Naive thymus-derived CD4-positive, alpha-beta T cell (primary cell): ENCODE measurements at regions of chr7 and their contacts with region 1.

Region 1: DNA sequence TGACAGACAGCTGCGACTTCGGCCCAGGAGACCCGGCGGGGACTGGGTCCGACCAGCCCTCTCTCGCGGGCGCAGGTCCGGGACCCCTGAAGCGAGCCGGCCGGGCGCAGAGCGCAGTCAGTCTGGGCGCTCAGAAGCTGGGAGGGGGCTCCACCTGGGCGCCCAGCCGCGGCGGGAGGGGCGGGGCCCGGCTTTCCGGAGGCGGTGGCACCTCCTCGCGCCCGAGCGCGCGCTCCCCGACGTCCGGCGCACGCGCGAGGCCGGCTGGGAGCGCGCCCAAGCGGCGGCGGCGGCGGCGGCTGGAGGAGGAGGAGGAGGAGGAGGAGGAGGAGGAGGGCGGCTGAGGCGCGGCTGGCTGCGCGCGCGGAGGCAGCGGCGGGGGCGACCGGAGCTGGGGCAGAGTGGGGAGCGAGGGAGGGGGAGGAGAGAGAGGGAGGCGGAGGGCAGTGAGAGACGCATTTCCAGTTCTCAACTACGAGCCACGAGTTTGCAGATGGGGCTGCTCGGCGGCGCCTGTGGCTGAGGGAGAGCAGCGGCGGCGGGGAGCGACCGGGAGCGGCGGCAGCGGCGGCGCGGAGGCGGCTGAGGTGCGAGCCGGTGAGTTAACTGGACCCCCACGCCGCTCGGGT is at the start of gene PALS2:
- DNase-seq: peak; percentile 78 to 88 (median 85)
- ATAC-seq: peak; percentile 88
- H3K4me3 ChIP-seq: peak within 1 kb of the TSS; percentile 78
- H3K4me3 Mint-ChIP-seq: peak within 1 kb of the TSS; percentile 93 to 100 (median 94)
- H3K27ac ChIP-seq: peak within 1 kb of the TSS; percentile 77
- H3K27ac Mint-ChIP-seq: peak within 1 kb of the TSS; percentile 84 to 96 (median 94)
- H3K4me1 ChIP-seq: peaks cover 13 to 24% of the 10 kb centered on the region in 2 donors
- H3K4me1 Mint-ChIP-seq: peaks cover 21 to 52% (median 42%) of the 10 kb centered on the region in 7 donors
- H3K27me3 ChIP-seq: no peaks in the 10 kb centered on the region
- H3K27me3 Mint-ChIP-seq: peaks cover 0 to 45% (median 0%) of the 10 kb centered on the region in 5 donors
- total RNA-seq, gene PALS2: 15.4 to 58.4 (median 34.0) TPM

Region 2: GRCh38 chr7:22672846-22673652 is 1900.1 kb before region 1 on chr7:
- CTCF ChIA-PET with region 1: no interaction called
- POLR2A ChIA-PET with region 1: no interaction called
- intact Hi-C with region 1: loop called in 1 of 2 experiments (anchors 5 kb)
- DNase-seq: no peak
- ATAC-seq: no peak
- H3K4me3 ChIP-seq: no peak overlapping the region
- H3K4me3 Mint-ChIP-seq: peak overlapping the region in 7 of 10 donors; percentile 7 to 68 (median 37)
- H3K27ac ChIP-seq: no peak overlapping the region
- H3K27ac Mint-ChIP-seq: peak overlapping the region; percentile 14 to 88 (median 78)
- H3K4me1 ChIP-seq: peaks cover 18 to 54% of the 10 kb centered on the region in 2 donors
- H3K4me1 Mint-ChIP-seq: peaks cover 43 to 68% (median 65%) of the 10 kb centered on the region in 7 donors
- H3K27me3 ChIP-seq: no peaks in the 10 kb centered on the region
- H3K27me3 Mint-ChIP-seq: peaks cover 0 to 13% (median 0%) of the 10 kb centered on the region in 5 donors

Region 3: DNA sequence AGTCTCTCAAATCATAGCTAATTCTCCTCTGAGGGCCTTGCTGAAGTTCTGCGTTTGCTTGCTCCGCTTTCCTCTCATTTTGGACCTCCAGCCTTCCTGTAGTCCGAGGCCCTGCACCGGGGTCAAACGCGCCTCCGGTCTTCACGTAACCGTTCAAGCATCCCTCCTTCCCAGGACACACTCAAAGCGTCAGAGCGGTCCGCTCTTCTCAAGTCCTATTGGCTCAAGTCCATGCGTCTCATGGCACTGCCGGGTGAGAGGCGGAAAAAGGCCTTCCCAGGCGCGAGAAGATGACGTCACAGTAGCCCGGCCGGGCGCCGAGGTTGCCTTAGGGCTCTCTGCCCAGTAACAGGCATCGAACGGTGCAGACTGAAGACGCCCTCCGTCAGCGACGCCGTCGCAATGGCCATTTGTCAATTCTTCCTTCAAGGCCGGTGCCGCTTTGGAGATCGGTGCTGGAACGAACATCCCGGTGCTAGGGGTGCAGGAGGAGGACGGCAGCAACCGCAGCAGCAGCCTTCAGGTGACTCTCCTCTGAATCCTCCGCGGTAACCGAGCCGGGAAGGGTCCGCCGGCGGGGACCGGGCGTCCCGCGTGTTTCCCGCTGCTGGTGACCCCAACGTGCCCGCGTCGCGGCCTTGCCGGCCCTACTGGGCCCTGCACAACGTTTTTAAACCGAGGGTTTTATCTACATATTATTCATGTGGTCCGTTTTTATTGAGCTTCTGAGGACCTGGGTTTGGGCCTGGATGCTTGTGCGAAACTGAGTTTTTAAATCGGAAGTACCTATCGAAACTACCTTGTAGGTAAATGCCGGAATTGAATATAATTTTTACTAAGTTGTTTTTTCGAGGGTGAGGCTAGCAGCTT is 1391.2 kb before region 1 on chr7 and contains the start of gene NUP42:
- CTCF ChIA-PET with region 1: no interaction called
- POLR2A ChIA-PET with region 1: no interaction called
- intact Hi-C with region 1: loop called in 1 of 2 experiments (anchors 5 kb)
- DNase-seq: peak; percentile 87 to 95 (median 93)
- ATAC-seq: peak; percentile 97
- H3K4me3 ChIP-seq: peak within 1 kb of the TSS; percentile 86
- H3K4me3 Mint-ChIP-seq: peak within 1 kb of the TSS; percentile 95 to 100 (median 98)
- H3K27ac ChIP-seq: peak within 1 kb of the TSS; percentile 85
- H3K27ac Mint-ChIP-seq: peak within 1 kb of the TSS; percentile 97 to 99 (median 98)
- H3K4me1 ChIP-seq: peaks cover 16 to 17% of the 10 kb centered on the region in 2 donors
- H3K4me1 Mint-ChIP-seq: peaks cover 20 to 50% (median 43%) of the 10 kb centered on the region in 7 donors
- H3K27me3 ChIP-seq: no peaks in the 10 kb centered on the region
- H3K27me3 Mint-ChIP-seq: peaks cover 0 to 16% (median 0%) of the 10 kb centered on the region in 5 donors
- total RNA-seq, gene NUP42: 19.8 to 37.7 (median 27.5) TPM

Region 4: DNA sequence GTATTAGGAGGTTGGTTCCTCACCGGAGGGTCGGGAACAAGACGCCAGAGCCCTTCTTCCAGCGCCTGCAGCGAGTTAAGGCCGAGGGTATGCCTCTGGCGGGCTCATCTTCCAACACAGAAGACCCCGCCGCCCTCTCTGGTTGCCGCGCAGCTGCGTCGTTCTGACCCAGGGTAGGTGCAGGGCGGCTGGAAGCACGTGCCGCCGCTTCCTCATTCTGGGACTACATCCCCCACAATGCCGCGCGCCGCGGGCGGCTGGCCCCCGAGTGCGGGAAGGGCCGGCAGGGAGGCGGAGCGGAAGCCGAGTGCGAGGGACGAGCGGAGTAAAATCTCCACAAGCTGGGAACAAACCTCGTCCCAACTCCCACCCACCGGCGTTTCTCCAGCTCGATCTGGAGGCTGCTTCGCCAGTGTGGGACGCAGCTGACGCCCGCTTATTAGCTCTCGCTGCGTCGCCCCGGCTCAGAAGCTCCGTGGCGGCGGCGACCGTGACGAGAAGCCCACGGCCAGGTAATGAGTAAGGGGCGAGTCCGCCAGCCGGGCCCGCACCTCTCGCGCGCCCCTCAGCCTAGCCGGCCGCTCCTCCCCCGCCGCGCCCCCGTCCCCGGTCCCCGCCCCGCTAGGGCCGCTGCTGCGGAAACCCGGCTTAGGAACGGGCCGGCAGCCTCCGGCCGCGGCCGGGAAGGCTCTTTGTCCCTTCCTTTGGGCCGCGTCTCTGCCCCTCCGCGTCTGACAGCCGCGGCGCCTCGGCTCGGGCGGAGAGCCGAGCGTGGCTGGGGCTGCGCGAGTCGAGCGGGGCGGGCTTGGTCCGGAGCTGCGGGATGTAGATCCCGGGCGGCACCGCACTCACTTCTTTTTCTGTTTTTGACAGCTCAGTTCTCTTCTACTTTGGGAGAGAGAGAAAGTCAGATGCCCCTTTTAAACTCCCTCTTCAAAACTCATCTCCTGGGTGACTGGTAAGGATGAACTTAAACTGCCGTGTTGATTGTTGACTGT is 975.7 kb before region 1 on chr7 and contains the start of gene CCDC126:
- CTCF ChIA-PET with region 1: no interaction called
- POLR2A ChIA-PET with region 1: no interaction called
- intact Hi-C with region 1: loop called (anchors 2 to 5 kb)
- DNase-seq: peak; percentile 64 to 83 (median 76)
- ATAC-seq: peak; percentile 98
- H3K4me3 ChIP-seq: peak within 1 kb of the TSS; percentile 93
- H3K4me3 Mint-ChIP-seq: peak within 1 kb of the TSS; percentile 86 to 98 (median 94)
- H3K27ac ChIP-seq: peak within 1 kb of the TSS; percentile 74
- H3K27ac Mint-ChIP-seq: peak within 1 kb of the TSS; percentile 59 to 86 (median 80)
- H3K4me1 ChIP-seq: peaks cover 9 to 13% of the 10 kb centered on the region in 2 donors
- H3K4me1 Mint-ChIP-seq: peaks cover 34 to 52% (median 39%) of the 10 kb centered on the region in 7 donors
- H3K27me3 ChIP-seq: no peaks in the 10 kb centered on the region
- H3K27me3 Mint-ChIP-seq: peaks cover 0 to 7% (median 4%) of the 10 kb centered on the region in 5 donors
- total RNA-seq, gene CCDC126: 7.0 to 24.7 (median 17.1) TPM

Region 5: DNA sequence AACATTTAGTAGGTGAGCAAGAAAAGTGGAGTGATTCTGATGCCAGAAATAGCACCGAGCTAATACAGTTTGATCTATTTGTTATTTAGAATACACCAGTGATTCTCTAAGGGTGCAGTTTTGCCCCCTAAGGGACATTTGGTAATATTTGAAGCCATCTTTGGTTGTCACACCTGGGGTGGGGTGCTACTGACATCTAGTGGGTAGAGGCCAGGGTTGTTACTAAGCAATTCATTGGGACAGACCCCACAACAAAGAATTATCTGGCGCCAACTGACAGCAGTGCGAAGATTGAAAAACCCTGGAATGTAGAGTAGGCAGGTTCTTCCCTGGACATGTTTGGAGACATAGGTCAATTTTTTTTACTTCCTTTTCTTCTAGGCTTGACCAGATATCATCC is 14.7 kb after region 1 on chr7:
- CTCF ChIA-PET with region 1: interaction called, 4 read pairs
- POLR2A ChIA-PET with region 1: interaction called, 3 read pairs
- intact Hi-C with region 1: loop called in 1 of 2 experiments (anchors 1 kb)
- DNase-seq: peak in 8 of 9 donors; percentile 21 to 70 (median 63)
- ATAC-seq: peak; percentile 88
- H3K4me3 ChIP-seq: no peak overlapping the region
- H3K4me3 Mint-ChIP-seq: no peak overlapping the region
- H3K27ac ChIP-seq: no peak overlapping the region
- H3K27ac Mint-ChIP-seq: peak overlapping the region in 2 of 9 donors; percentile 0 to 26
- H3K4me1 ChIP-seq: no peaks in the 10 kb centered on the region
- H3K4me1 Mint-ChIP-seq: peaks cover 7 to 40% (median 27%) of the 10 kb centered on the region in 7 donors
- H3K27me3 ChIP-seq: no peaks in the 10 kb centered on the region
- H3K27me3 Mint-ChIP-seq: no peaks in the 10 kb centered on the region

Region 6: GRCh38 chr7:24979863-24980533 is 406.9 kb after region 1 on chr7 and contains the start of gene OSBPL3:
- CTCF ChIA-PET with region 1: no interaction called
- POLR2A ChIA-PET with region 1: no interaction called
- intact Hi-C with region 1: loop called (anchors 2 to 5 kb)
- DNase-seq: peak; percentile 86 to 96 (median 93)
- ATAC-seq: peak; percentile 95
- H3K4me3 ChIP-seq: peak within 1 kb of the TSS; percentile 84
- H3K4me3 Mint-ChIP-seq: peak within 1 kb of the TSS; percentile 93 to 97 (median 96)
- H3K27ac ChIP-seq: peak within 1 kb of the TSS; percentile 69
- H3K27ac Mint-ChIP-seq: peak within 1 kb of the TSS; percentile 73 to 95 (median 89)
- H3K4me1 ChIP-seq: peaks cover 26 to 32% of the 10 kb centered on the region in 2 donors
- H3K4me1 Mint-ChIP-seq: peaks cover 40 to 65% (median 56%) of the 10 kb centered on the region in 7 donors
- H3K27me3 ChIP-seq: no peaks in the 10 kb centered on the region
- H3K27me3 Mint-ChIP-seq: peaks cover 0 to 4% (median 0%) of the 10 kb centered on the region in 5 donors
- total RNA-seq, gene OSBPL3: 17.1 to 75.7 (median 22.7) TPM

Region 7: GRCh38 chr7:25259587-25260243 is 686.6 kb after region 1 on chr7:
- CTCF ChIA-PET with region 1: no interaction called
- POLR2A ChIA-PET with region 1: no interaction called
- intact Hi-C with region 1: loop called in 1 of 2 experiments (anchors 2 kb)
- DNase-seq: peak; percentile 23 to 82 (median 74)
- ATAC-seq: peak; percentile 86
- H3K4me3 ChIP-seq: no peak overlapping the region
- H3K4me3 Mint-ChIP-seq: peak overlapping the region in 8 of 10 donors; percentile 51 to 75 (median 68)
- H3K27ac ChIP-seq: no peak overlapping the region
- H3K27ac Mint-ChIP-seq: peak overlapping the region in 7 of 9 donors; percentile 56 to 91 (median 81)
- H3K4me1 ChIP-seq: peaks cover 0 to 23% of the 10 kb centered on the region in 2 donors
- H3K4me1 Mint-ChIP-seq: peaks cover 15 to 37% (median 33%) of the 10 kb centered on the region in 7 donors
- H3K27me3 ChIP-seq: no peaks in the 10 kb centered on the region
- H3K27me3 Mint-ChIP-seq: peaks cover 0 to 14% (median 7%) of the 10 kb centered on the region in 5 donors